AG04450 (cell line): ENCODE measurements at regions of chr17 and their contacts with region 1.

Region 1: GRCh38 chr17:46193626-46194392 is 580 bp upstream of the KANSL1 start:
- DNase-seq: peak; percentile 70
- H3K4me3 ChIP-seq: peak overlapping the region; percentile 81
- H3K27ac ChIP-seq: peak overlapping the region; percentile 87
- H3K27me3 ChIP-seq: no peaks in the 10 kb centered on the region
- CTCF ChIP-seq: no peak; the same call in 1 of the 2 replicates

Region 2: GRCh38 chr17:46002311-46002972 is 191.4 kb before region 1 on chr17:
- CTCF ChIA-PET with region 1: interaction called, 16 read pairs
- POLR2A ChIA-PET with region 1: no interaction called
- DNase-seq: peak; percentile 16
- H3K4me3 ChIP-seq: no peak overlapping the region
- H3K27ac ChIP-seq: no peak overlapping the region
- H3K27me3 ChIP-seq: peaks cover 4% of the 10 kb centered on the region
- CTCF ChIP-seq: peak; percentile 88

Region 3: DNA sequence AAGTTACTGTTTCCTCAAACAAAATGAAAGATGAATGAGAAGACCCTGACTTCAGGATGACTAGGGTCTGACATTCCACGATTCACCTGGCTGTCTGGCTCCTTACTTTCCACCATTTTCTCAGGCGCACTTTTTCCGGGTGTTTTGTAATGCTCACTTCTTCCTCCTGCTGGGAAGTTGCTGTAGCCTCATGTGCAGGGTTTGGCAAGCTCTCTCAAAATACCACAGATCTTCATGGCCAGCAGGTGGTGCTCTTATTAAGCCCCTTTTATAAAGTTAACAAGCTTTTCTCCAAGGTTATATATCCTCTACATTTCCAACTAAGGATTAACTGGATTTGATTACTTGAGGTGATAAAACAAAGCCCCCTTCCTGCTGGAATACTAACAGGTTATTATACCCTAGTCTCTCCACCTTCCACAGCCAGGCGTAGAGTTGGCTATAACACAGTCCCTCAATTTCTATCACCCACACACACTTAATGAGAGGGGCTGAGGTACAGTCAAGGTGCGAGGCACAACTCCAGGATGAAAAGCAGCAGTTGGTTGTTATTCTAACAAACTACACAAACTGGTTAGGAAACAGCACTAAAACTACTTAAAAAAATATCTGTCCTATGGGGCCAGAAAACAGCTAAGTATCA is 149.4 kb before region 1 on chr17:
- CTCF ChIA-PET with region 1: interaction called, 50 read pairs
- POLR2A ChIA-PET with region 1: interaction called, 11 read pairs
- DNase-seq: peak; percentile 82
- H3K4me3 ChIP-seq: no peak overlapping the region
- H3K27ac ChIP-seq: no peak overlapping the region
- H3K27me3 ChIP-seq: no peaks in the 10 kb centered on the region
- CTCF ChIP-seq: peak; percentile 93

Region 4: GRCh38 chr17:46072998-46073397 is 120.8 kb before region 1 on chr17:
- CTCF ChIA-PET with region 1: interaction called, 17 read pairs
- POLR2A ChIA-PET with region 1: interaction called, 3 read pairs
- DNase-seq: peak; percentile 30
- H3K4me3 ChIP-seq: no peak overlapping the region
- H3K27ac ChIP-seq: no peak overlapping the region
- H3K27me3 ChIP-seq: no peaks in the 10 kb centered on the region
- CTCF ChIP-seq: no peak

Region 5: DNA sequence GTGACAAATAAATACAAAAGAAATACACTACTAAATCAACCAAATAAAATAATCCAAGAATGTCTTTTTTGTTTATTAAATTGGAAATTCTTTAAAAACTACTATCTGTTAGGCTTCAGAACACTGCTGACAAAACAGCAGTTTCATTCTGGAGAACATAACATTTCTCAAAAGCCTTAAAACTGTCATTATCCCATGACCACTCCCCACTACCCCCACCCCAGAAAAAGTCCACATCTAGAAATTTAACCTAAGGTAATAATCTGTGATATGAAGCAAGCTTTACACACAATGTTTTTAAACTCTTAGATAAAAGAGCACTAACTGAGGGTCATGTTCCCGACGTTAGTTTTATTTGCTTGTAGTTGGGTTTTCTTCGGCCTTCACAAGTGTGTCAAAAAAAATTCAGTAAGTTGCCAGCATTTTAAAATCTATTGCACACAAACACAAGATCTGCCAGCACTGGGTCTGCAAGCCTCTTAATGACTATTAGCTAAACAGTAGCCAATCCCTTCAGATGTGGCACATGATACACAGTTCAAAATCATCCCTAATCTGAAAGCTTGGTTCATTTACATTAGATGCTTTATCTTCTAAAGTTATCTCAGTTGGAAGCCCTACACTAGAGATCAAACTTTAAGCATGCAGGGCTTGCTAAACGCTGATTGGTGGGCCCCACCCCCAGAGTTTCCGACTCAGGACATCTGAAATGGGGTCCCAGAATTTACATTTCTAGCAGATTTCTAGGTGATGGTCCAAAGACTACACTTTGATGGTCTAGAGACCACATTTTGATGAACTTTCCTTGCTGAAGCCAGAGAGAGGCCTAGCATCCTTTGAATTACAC is 75.7 kb before region 1 on chr17:
- CTCF ChIA-PET with region 1: interaction called, 12 read pairs
- POLR2A ChIA-PET with region 1: no interaction called
- DNase-seq: no peak
- H3K4me3 ChIP-seq: no peak overlapping the region
- H3K27ac ChIP-seq: no peak overlapping the region
- H3K27me3 ChIP-seq: no peaks in the 10 kb centered on the region
- CTCF ChIP-seq: no peak

Region 6: DNA sequence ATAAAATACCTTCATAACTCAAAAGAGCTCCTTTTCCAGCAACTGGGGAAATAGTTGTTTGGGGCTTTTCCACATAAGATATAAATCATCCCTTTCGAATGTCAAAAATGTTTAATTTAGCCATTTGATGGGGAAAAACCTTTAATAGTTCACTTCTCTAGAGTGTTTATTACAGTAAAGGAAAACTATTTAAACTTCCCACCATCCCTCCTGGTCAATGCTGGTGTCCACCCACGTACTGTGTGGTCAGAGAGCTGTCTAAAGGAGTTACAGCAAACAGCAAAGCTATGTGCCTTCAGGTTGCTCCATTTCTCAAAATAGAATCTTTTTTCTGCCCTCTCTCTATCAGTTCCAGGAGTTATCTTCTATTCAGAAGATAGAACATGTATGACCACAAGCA is 34.1 kb before region 1 on chr17:
- CTCF ChIA-PET with region 1: interaction called, 16 read pairs
- POLR2A ChIA-PET with region 1: interaction called, 3 read pairs
- DNase-seq: peak; percentile 54
- H3K4me3 ChIP-seq: no peak overlapping the region
- H3K27ac ChIP-seq: no peak overlapping the region
- H3K27me3 ChIP-seq: no peaks in the 10 kb centered on the region
- CTCF ChIP-seq: no peak

Region 7: DNA sequence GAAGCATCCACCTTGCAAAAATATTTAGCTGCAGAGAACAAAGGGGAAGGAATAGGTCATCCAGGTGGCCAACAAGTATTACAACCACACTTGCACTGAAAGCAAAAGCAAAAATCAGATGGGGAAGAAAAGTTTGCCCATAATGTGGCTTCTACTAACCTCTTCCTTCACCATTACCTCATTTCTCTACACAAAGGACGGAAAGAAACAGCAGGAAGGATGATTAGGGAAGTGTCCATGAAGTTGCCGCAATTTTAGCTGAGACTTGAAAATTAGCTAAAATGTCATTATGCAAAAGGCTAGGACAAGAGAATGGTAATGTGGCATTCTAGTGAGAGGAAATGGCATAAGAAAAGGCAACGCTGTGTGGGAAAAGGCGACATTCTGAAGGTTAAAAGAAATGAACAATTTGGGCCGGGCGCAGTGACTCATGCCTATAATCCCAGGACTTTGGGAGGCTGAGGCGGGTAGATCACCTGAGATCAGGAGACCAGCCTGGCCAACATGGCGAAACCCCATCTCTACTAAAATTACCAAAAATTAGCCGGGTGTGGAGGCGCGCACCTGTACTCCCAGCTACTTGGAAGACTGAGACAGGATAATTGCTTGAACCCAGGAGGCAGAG is 14.3 kb before region 1 on chr17:
- CTCF ChIA-PET with region 1: interaction called, 34 read pairs
- POLR2A ChIA-PET with region 1: no interaction called
- DNase-seq: no peak
- H3K4me3 ChIP-seq: no peak overlapping the region
- H3K27ac ChIP-seq: no peak overlapping the region
- H3K27me3 ChIP-seq: no peaks in the 10 kb centered on the region
- CTCF ChIP-seq: no peak

Region 8: GRCh38 chr17:46772013-46772876 is 578.4 kb after region 1 on chr17:
- CTCF ChIA-PET with region 1: no interaction called
- POLR2A ChIA-PET with region 1: no interaction called
- DNase-seq: no peak
- H3K4me3 ChIP-seq: peak overlapping the region; percentile 52
- H3K27ac ChIP-seq: no peak overlapping the region
- H3K27me3 ChIP-seq: peaks cover 3% of the 10 kb centered on the region
- CTCF ChIP-seq: no peak